CD4-positive, alpha-beta memory T cell (primary cell): ENCODE measurements at regions of chr9 and their contacts with region 1.

Region 1: DNA sequence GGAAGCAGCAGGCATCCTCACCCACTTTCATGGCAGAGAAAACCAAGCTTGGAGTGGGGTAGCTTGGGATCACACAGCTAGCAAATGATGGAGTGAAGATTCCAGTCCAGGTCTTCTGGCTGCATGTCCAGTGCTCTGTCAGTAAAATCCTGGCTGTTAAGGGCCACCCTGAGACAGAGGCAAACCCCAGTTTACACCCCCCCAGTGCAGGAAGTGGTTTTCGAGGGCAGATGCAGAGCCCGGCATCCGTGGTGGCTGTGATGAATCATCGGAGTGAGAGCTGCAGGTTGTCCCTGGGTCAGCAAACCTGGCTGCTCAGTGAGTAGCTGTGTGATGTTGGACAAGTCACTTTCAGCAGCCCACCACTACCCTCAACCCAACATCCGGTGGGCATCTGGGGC is 115.4 kb downstream of the RGS3 start:
- DNase-seq: peak; percentile 72 to 92 (median 81)
- H3K4me3 ChIP-seq: peak overlapping the region in 1 of 2 donors; percentile 47
- H3K4me3 Mint-ChIP-seq: peak overlapping the region; percentile 71 to 92 (median 82)
- H3K27ac ChIP-seq: peak overlapping the region; percentile 69
- H3K27ac Mint-ChIP-seq: peak overlapping the region; percentile 88 to 97 (median 96)
- H3K4me1 ChIP-seq: peaks cover 65% of the 10 kb centered on the region
- H3K4me1 Mint-ChIP-seq: peaks cover 57 to 88% (median 75%) of the 10 kb centered on the region in 4 donors
- H3K27me3 ChIP-seq: no peaks in the 10 kb centered on the region
- H3K27me3 Mint-ChIP-seq: no peaks in the 10 kb centered on the region

Region 2: GRCh38 chr9:113446323-113446740 is 132.6 kb before region 1 on chr9:
- CTCF ChIA-PET with region 1: interaction called, 322 read pairs
- POLR2A ChIA-PET with region 1: interaction called, 16 read pairs
- intact Hi-C with region 1: loop called (anchors 2 kb)
- DNase-seq: peak in 4 of 5 donors; percentile 38 to 53 (median 43)
- H3K4me3 ChIP-seq: no peak overlapping the region
- H3K4me3 Mint-ChIP-seq: no peak overlapping the region
- H3K27ac ChIP-seq: no peak overlapping the region
- H3K27ac Mint-ChIP-seq: no peak overlapping the region
- H3K4me1 ChIP-seq: no peaks in the 10 kb centered on the region
- H3K4me1 Mint-ChIP-seq: peaks cover 0 to 1% (median 0%) of the 10 kb centered on the region in 4 donors
- H3K27me3 ChIP-seq: no peaks in the 10 kb centered on the region
- H3K27me3 Mint-ChIP-seq: no peaks in the 10 kb centered on the region

Region 3: DNA sequence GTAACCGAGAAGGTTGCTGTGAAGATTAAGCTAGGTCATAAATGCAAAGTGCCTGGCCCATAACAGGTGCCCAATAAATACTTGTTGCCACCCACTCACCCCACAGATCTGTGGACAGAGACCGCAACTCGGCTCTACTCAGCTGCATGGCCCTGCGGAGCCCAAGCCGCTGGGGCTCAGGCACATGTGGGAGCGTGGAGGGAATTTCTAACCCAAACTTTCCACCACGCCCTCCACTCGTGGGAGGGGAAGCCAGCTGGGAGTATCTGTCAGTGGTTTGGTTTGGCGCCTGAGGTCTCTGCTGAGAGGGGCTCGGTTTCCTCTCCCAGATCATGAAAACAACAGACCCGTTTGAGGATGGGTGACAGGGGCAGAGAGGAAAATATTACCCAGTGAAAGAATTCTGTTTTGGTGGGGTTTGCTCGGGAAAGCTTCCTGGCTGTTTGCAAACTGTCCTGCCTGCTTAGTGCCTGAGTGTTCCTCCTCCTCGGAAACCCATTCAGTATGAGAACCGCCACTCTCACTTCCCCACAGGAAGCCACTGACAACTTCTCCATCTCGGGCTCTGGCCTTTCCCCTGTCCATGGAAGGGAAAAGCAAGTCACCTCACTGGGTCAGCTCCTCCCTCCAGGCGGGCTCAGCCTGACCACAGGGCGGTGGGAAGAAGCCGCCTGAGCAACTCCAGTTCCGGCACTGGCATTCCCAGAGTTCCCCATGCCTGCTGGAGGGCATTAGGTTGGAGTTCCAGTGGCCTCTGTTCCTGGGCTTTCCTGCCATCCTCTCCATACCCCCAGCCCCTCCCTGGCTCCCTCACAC is 55.3 kb before region 1 on chr9:
- CTCF ChIA-PET with region 1: interaction called, 26 read pairs
- POLR2A ChIA-PET with region 1: interaction called, 342 read pairs
- intact Hi-C with region 1: no loop called
- DNase-seq: peak in 4 of 5 donors; percentile 15 to 73 (median 26)
- H3K4me3 ChIP-seq: peak overlapping the region; percentile 3 to 38
- H3K4me3 Mint-ChIP-seq: peak overlapping the region; percentile 65 to 82 (median 76)
- H3K27ac ChIP-seq: peak overlapping the region; percentile 39
- H3K27ac Mint-ChIP-seq: peak overlapping the region; percentile 61 to 89 (median 88)
- H3K4me1 ChIP-seq: peaks cover 79% of the 10 kb centered on the region
- H3K4me1 Mint-ChIP-seq: peaks cover 61 to 89% (median 75%) of the 10 kb centered on the region in 4 donors
- H3K27me3 ChIP-seq: no peaks in the 10 kb centered on the region
- H3K27me3 Mint-ChIP-seq: no peaks in the 10 kb centered on the region

Region 4: DNA sequence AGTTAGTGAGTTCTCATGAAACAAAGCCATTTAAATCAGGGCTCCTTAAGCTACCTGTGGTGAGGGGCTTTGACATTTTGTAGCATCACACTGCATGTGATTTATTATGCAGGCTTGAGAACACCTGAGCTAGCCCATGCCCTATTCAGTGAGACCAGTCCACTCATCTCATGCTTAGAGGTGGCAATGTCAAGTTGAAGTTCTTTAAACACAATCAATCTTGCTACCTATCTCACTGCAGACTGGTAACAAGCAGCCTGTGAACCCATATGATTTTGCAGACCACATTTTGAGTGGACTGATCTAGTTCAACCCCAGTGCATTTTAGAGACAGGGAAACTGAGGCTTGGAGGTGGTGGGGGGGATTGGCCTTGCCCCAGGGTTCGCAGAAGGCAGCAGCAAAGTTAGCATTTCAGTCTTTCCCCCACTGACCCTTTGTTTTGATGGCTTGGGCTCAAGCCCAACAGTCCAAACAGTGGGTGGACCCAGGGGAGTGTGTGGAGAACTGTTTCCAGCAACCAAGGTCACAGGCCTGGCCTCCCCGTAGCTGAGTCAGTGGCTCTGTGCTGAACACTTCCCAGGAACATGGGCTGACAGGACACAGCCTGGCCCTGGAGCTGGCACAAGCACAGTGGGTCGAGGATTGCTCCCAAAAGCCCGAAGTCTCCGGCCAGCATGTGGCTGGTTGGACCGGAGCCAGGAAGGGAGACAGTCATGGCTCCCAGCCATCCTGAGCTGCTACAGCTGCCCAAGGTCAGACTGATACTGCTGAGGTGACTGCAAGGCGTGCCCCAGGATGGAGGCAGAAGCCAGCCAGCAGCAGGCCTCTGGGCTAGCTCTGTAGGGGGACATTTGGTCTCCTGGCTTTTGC is 20.0 kb before region 1 on chr9:
- CTCF ChIA-PET with region 1: interaction called, 13 read pairs
- POLR2A ChIA-PET with region 1: interaction called, 4 read pairs
- intact Hi-C with region 1: no loop called
- DNase-seq: no peak
- H3K4me3 ChIP-seq: no peak overlapping the region
- H3K4me3 Mint-ChIP-seq: no peak overlapping the region
- H3K27ac ChIP-seq: no peak overlapping the region
- H3K27ac Mint-ChIP-seq: peak overlapping the region in 6 of 7 donors; percentile 29 to 73 (median 69)
- H3K4me1 ChIP-seq: peaks cover 17% of the 10 kb centered on the region
- H3K4me1 Mint-ChIP-seq: peaks cover 16 to 46% (median 32%) of the 10 kb centered on the region in 4 donors
- H3K27me3 ChIP-seq: no peaks in the 10 kb centered on the region
- H3K27me3 Mint-ChIP-seq: no peaks in the 10 kb centered on the region